ENCODE measurements at regions of chr19 and their contacts with region 1.

Region 1: DNA sequence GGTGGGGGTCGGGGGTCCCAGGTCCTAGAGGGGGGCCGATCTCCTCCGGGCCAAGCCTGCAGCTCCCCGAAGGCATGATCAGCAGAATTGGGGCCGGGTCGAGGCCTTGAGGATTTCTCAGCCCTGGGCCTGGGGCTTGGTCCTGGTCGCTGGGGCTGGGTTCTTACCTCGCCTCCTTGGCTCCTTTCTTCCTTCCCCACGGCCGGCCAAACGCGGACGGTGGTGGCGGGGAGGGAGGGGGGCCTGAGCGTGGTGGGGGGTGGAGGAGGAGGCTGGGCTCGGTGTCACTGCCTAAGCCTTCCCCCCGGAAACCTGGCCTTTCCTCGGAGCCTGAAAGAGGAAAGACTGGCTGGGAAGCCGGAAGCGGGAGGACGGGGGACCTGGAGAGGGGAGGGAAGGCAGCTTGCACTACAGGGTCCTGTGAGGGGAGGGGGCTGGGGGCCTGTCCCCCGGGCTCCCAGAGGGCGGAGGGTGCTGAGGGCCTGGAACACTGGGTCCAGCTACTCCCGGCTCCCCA is at the start of gene ZNF579:
- DNase-seq: peak; percentile 81
- H3K4me3 ChIP-seq: peak within 1 kb of the TSS; percentile 62 to 98 (median 84)
- H3K27ac ChIP-seq: peak within 1 kb of the TSS; percentile 59
- H3K4me1 ChIP-seq: peaks cover 4% of the 10 kb centered on the region
- H3K27me3 ChIP-seq: peaks cover 4 to 7% of the 10 kb centered on the region in 2 experiments
- CTCF ChIP-seq: no peak
- POLR2A ChIP-seq: peak; percentile 17
- total RNA-seq, gene ZNF579: 15.7 and 15.9 TPM in 2 replicates

Region 2: GRCh38 chr19:55487632-55488152 is 93.0 kb before region 1 on chr19:
- CTCF ChIA-PET with region 1: no interaction called
- POLR2A ChIA-PET with region 1: no interaction called
- dilution Hi-C with region 1: no loop called
- intact Hi-C with region 1: no loop called
- DNase-seq: peak; percentile 83
- H3K4me3 ChIP-seq: no peak overlapping the region
- H3K27ac ChIP-seq: peak overlapping the region; percentile 92
- H3K4me1 ChIP-seq: peaks cover 34% of the 10 kb centered on the region
- H3K27me3 ChIP-seq: no peaks in the 10 kb centered on the region
- CTCF ChIP-seq: no peak
- POLR2A ChIP-seq: no peak

Region 3: GRCh38 chr19:55549500-55550320 is 31.0 kb before region 1 on chr19:
- CTCF ChIA-PET with region 1: interaction called, 3 read pairs
- POLR2A ChIA-PET with region 1: interaction called, 5 read pairs
- dilution Hi-C with region 1: no loop called
- intact Hi-C with region 1: loop called (anchors 1 kb)
- DNase-seq: peak; percentile 86
- H3K4me3 ChIP-seq: peak overlapping the region in 2 of 3 experiments; percentile 21 to 26
- H3K27ac ChIP-seq: peak overlapping the region; percentile 96
- H3K4me1 ChIP-seq: peaks cover 33% of the 10 kb centered on the region
- H3K27me3 ChIP-seq: peaks cover 0 to 3% of the 10 kb centered on the region in 2 experiments
- CTCF ChIP-seq: peak in 1 of 2 donors; percentile 13
- POLR2A ChIP-seq: no peak